Activated CD4-positive, alpha-beta T cell treated with anti-CD3 and anti-CD28 coated beads, Interleukin-2, amount 10 ng/mL, durations not matched to agents 24 days and 14 days (primary cell): ENCODE measurements at regions of chr2 and their contacts with region 1.

Region 1: GRCh38 chr2:227411320-227411989 is 23.7 kb upstream of the SCYGR1 start:
- DNase-seq: peak; percentile 80
- H3K4me3 Mint-ChIP-seq: peak overlapping the region; percentile 63
- H3K27ac Mint-ChIP-seq: peak overlapping the region; percentile 94
- H3K4me1 Mint-ChIP-seq: peaks cover 57% of the 10 kb centered on the region
- H3K27me3 Mint-ChIP-seq: no peaks in the 10 kb centered on the region

Region 2: DNA sequence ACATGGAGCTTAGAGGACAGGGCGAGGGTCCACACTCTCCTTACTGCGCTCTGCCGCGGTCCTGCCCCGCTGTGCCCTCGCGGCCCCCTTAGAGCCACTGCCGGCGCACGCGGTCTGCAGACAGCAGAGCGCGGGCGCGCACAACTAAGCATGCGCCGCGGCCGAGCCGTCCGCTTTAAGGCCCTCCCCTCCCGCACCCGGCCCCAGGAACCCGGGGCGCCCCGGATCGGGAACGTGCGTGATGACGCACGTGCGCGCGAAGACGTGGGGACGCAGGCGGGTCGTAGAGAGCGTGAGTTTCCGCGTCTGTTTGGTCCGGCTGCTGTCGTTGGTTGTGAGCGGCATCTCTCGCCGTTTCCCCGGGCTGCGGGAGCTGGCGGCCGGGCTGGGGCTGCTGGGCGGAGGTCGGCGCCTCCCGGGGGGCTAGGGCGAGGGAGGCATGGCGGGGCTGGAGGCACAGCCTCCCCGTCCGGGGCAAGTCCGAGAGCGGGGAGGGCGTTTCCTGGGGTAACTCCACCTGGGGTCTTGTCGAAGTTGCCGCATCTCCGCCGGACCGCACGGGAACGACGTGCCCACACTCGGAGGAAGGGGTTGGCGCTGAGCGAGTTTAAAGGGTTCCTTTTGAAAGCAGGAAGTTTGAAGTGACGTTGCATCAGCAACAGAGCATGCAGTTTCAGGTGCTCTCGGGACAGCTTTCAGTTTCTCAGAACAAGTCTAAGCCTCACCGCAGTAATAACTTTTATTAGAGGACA is 575.5 kb before region 1 on chr2 and contains the start of gene RHBDD1:
- intact Hi-C with region 1: loop called (anchors 2 kb)
- DNase-seq: peak; percentile 98
- H3K4me3 Mint-ChIP-seq: peak within 1 kb of the TSS; percentile 95
- H3K27ac Mint-ChIP-seq: peak within 1 kb of the TSS; percentile 97
- H3K4me1 Mint-ChIP-seq: peaks cover 54% of the 10 kb centered on the region
- H3K27me3 Mint-ChIP-seq: no peaks in the 10 kb centered on the region
- total RNA-seq, gene RHBDD1: 41.3 and 44.7 TPM in 2 replicates

Region 3: GRCh38 chr2:227033471-227034148 is 377.8 kb before region 1 on chr2:
- intact Hi-C with region 1: no loop called
- DNase-seq: peak; percentile 68
- H3K4me3 Mint-ChIP-seq: no peak overlapping the region
- H3K27ac Mint-ChIP-seq: no peak overlapping the region
- H3K4me1 Mint-ChIP-seq: no peaks in the 10 kb centered on the region
- H3K27me3 Mint-ChIP-seq: peaks cover 9% of the 10 kb centered on the region

Region 4: DNA sequence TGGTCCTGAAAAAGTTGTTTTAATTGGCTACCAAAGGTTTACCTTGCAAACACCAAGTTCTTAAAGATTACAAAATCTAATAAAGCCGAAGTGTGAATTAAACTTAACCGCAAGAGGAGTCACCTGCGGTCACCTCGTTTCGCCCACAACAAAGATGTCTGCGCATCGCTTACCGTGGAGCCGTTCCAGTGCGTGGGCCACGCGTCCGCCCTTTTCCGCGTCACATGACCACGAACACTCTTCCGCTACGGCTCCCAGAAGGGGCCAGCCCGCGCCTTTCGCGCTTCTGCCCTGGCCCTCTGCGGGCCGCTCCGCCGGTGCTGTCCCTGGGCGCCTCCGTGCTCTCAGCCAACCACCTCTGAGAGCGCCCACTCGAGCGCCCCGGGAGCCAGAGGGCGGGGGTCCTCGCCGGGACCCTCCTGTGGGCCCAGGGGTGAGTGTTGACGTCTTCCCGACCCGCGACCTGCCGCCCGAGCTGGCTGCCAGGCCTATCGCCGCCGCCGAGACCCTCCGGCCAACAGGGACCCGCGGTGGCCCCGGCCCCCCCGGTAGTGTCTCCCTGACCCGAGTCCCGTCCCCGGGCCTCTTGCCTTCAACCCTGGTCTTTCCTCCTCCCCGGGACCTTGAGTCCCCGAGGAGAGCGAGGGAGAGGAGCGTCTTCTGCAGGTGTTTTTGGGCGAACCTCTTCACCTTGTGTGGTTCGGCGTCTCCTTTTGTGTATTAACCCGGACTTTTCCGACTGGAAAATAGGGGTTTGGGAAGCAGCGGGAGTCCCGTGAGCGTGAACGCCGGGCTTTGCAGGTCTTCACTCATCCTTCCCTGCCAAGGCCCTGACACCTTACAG is 86.2 kb before region 1 on chr2 and contains the start of gene MFF:
- intact Hi-C with region 1: loop called (anchors 1 kb)
- DNase-seq: peak; percentile 97
- H3K4me3 Mint-ChIP-seq: peak within 1 kb of the TSS; percentile 94
- H3K27ac Mint-ChIP-seq: peak within 1 kb of the TSS; percentile 95
- H3K4me1 Mint-ChIP-seq: peaks cover 32% of the 10 kb centered on the region
- H3K27me3 Mint-ChIP-seq: peaks cover 6% of the 10 kb centered on the region
- total RNA-seq, gene MFF: 69.5 and 71.6 TPM in 2 replicates

Region 5: GRCh38 chr2:227374158-227374557 is 37.3 kb before region 1 on chr2:
- intact Hi-C with region 1: loop called (anchors 1 kb)
- DNase-seq: peak; percentile 70
- H3K4me3 Mint-ChIP-seq: no peak overlapping the region
- H3K27ac Mint-ChIP-seq: no peak overlapping the region
- H3K4me1 Mint-ChIP-seq: peaks cover 12% of the 10 kb centered on the region
- H3K27me3 Mint-ChIP-seq: no peaks in the 10 kb centered on the region

Region 6: GRCh38 chr2:227471924-227472264 is 60.4 kb after region 1 on chr2 and contains the start of gene AGFG1:
- intact Hi-C with region 1: loop called (anchors 2 kb)
- DNase-seq: peak; percentile 96
- H3K4me3 Mint-ChIP-seq: peak within 1 kb of the TSS; percentile 93
- H3K27ac Mint-ChIP-seq: peak within 1 kb of the TSS; percentile 84
- H3K4me1 Mint-ChIP-seq: peaks cover 41% of the 10 kb centered on the region
- H3K27me3 Mint-ChIP-seq: no peaks in the 10 kb centered on the region
- total RNA-seq, gene AGFG1: 221 and 229 TPM in 2 replicates

Region 7: GRCh38 chr2:227817850-227818674 is 406.6 kb after region 1 on chr2:
- intact Hi-C with region 1: loop called (anchors 1 kb)
- DNase-seq: peak; percentile 73
- H3K4me3 Mint-ChIP-seq: peak overlapping the region; percentile 27
- H3K27ac Mint-ChIP-seq: peak overlapping the region; percentile 89
- H3K4me1 Mint-ChIP-seq: peaks cover 19% of the 10 kb centered on the region
- H3K27me3 Mint-ChIP-seq: peaks cover 2% of the 10 kb centered on the region